AG04449 (cell line): ENCODE measurements at regions of chr10 and their contacts with region 1.

Region 1: GRCh38 chr10:58299580-58299979 is 30.6 kb downstream of the CISD1 start:
- DNase-seq: no peak
- H3K4me3 ChIP-seq: no peak overlapping the region
- CTCF ChIP-seq: peak; percentile 80

Region 2: GRCh38 chr10:58054881-58055280 is 244.7 kb before region 1 on chr10:
- CTCF ChIA-PET with region 1: no interaction called
- POLR2A ChIA-PET with region 1: no interaction called
- DNase-seq: no peak
- H3K4me3 ChIP-seq: no peak overlapping the region
- CTCF ChIP-seq: no peak

Region 3: DNA sequence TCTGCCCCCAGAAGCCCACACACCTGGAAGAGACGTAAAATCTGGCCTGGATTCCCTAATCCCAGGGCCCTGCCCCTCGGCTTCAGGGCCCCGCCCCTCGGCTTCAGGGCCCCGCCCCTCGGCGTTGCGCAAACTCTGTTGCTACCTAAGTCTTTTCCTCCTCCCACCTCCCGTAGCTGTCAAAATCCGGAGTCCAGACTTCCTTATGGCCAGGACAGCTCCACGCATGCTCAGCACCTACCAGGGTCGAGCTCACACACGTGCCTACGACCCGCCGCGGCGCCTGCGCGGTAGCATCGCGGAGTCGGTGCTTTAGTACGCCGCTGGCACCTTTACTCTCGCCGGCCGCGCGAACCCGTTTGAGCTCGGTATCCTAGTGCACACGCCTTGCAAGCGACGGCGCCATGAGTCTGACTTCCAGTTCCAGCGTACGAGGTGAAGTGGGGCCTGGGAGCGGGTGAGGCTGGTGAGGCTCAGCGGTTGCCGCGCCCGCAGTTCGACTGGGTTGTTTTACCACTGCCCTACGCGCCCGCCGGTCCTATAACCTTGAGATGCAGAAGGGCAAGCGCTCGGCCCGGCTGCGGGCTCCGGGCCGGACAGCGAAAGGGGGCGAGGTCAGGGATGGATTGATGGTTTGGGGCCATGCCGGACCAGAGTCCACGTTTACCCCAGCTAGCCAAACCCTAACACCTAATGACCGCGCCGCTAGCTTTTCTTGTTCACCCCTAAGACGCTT is 30.5 kb before region 1 on chr10 and contains the start of gene CISD1:
- CTCF ChIA-PET with region 1: interaction called, 38 read pairs
- POLR2A ChIA-PET with region 1: no interaction called
- DNase-seq: peak; percentile 98
- H3K4me3 ChIP-seq: peak within 1 kb of the TSS; percentile 87
- CTCF ChIP-seq: no peak

Region 4: DNA sequence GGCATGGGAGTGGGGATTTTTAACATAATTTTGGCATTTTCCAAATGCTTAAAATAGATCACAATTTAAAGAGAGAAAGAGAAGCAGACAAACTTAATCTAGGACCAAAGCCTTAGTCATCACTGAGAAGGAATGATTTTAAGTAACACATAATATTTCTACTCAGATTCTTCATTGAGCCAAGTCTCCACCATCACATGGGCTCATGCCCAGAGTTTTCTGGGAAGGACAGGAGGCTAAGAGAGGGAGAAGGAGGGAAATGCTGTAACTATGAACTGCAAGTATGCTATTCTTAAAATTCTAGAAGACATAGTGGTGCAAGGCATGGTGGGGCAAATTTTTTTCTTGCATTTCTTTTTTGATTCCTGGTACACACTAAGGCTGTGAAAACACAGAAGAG is 11.4 kb after region 1 on chr10:
- CTCF ChIA-PET with region 1: interaction called, 33 read pairs
- POLR2A ChIA-PET with region 1: no interaction called
- DNase-seq: no peak
- H3K4me3 ChIP-seq: no peak overlapping the region
- CTCF ChIP-seq: no peak

Region 5: GRCh38 chr10:58326967-58327381 is 27.4 kb after region 1 on chr10:
- CTCF ChIA-PET with region 1: interaction called, 12 read pairs
- POLR2A ChIA-PET with region 1: no interaction called
- DNase-seq: no peak
- H3K4me3 ChIP-seq: peak overlapping the region; percentile 35
- CTCF ChIP-seq: no peak

Region 6: GRCh38 chr10:58341947-58342346 is 42.4 kb after region 1 on chr10:
- CTCF ChIA-PET with region 1: interaction called, 14 read pairs
- POLR2A ChIA-PET with region 1: no interaction called
- DNase-seq: no peak
- H3K4me3 ChIP-seq: no peak overlapping the region
- CTCF ChIP-seq: no peak

Region 7: GRCh38 chr10:58384999-58385783 is 85.6 kb after region 1 on chr10 and contains the start of gene TFAM:
- CTCF ChIA-PET with region 1: interaction called, 74 read pairs
- POLR2A ChIA-PET with region 1: no interaction called
- DNase-seq: peak; percentile 67
- H3K4me3 ChIP-seq: peak within 1 kb of the TSS; percentile 94
- CTCF ChIP-seq: peak; percentile 80

Region 8: GRCh38 chr10:58393317-58393716 is 93.7 kb after region 1 on chr10:
- CTCF ChIA-PET with region 1: interaction called, 74 read pairs
- POLR2A ChIA-PET with region 1: no interaction called
- DNase-seq: no peak
- H3K4me3 ChIP-seq: no peak overlapping the region
- CTCF ChIP-seq: no peak

Region 9: DNA sequence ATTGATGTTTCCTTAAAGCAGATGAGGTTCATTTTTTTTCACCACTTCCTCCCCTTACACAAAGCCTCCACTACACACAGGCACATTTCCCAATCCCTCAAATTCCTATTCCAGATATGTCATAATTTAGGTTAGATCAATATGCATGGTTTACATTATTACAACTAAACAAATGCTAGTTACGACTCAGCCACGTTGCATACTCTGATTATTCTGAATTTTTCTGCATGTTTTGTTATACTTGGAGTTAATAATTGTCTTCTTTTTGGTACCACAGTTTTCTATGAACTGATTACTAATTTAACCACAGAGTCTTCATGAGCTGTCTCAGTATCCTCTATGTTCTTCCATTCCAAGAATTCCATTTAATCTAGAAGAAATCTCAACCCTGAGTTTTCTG is 208.7 kb after region 1 on chr10:
- CTCF ChIA-PET with region 1: no interaction called
- POLR2A ChIA-PET with region 1: no interaction called
- DNase-seq: peak; percentile 36
- H3K4me3 ChIP-seq: no peak overlapping the region
- CTCF ChIP-seq: no peak